Calu3 (cell line): ENCODE measurements at regions of chr15 and their contacts with region 1.

Region 1: GRCh38 chr15:92097474-92098178 is 244.1 kb downstream of the SLCO3A1 start:
- DNase-seq: peak; percentile 64
- H3K4me3 Mint-ChIP-seq: no peak overlapping the region
- H3K27ac Mint-ChIP-seq: no peak overlapping the region
- H3K4me1 Mint-ChIP-seq: peaks cover 7% of the 10 kb centered on the region
- H3K27me3 Mint-ChIP-seq: no peaks in the 10 kb centered on the region
- CTCF ChIP-seq: peak; percentile 85

Region 2: GRCh38 chr15:91970142-91970541 is 127.5 kb before region 1 on chr15:
- CTCF ChIA-PET with region 1: no interaction called
- intact Hi-C with region 1: no loop called
- DNase-seq: no peak
- H3K4me3 Mint-ChIP-seq: no peak overlapping the region
- H3K27ac Mint-ChIP-seq: no peak overlapping the region
- H3K4me1 Mint-ChIP-seq: peaks cover 59% of the 10 kb centered on the region
- H3K27me3 Mint-ChIP-seq: no peaks in the 10 kb centered on the region
- CTCF ChIP-seq: no peak

Region 3: GRCh38 chr15:92158434-92158833 is 60.8 kb after region 1 on chr15:
- CTCF ChIA-PET with region 1: no interaction called
- intact Hi-C with region 1: loop called (anchors 5 kb)
- DNase-seq: peak; percentile 81
- H3K4me3 Mint-ChIP-seq: no peak overlapping the region
- H3K27ac Mint-ChIP-seq: peak overlapping the region; percentile 74
- H3K4me1 Mint-ChIP-seq: peaks cover 32% of the 10 kb centered on the region
- H3K27me3 Mint-ChIP-seq: no peaks in the 10 kb centered on the region
- CTCF ChIP-seq: no peak

Region 4: DNA sequence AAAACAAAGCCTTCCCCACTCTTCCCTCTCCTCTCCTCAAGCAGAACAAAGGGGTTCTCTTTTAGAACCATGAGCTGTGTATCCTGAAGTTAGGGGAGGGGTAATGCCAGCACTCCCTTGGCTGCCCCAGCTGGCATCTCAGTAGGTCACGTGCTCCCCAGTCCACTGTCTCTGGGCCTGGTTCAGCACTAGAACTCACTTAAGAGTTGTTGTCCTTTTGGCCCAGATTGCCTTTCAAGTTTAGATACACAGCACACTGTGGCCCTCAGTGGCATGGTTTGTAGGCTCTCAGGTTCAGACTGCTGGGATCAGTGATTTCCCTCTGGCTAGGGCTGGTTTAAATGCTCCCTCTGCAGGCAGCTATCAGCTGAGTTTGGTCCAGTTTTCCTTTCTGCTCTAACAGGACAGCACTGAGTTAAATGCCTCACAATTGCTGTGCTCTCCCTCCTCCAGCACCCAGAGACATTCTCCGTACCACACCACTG is 107.7 kb after region 1 on chr15:
- CTCF ChIA-PET with region 1: no interaction called
- intact Hi-C with region 1: loop called (anchors 1 kb)
- DNase-seq: peak; percentile 8
- H3K4me3 Mint-ChIP-seq: no peak overlapping the region
- H3K27ac Mint-ChIP-seq: no peak overlapping the region
- H3K4me1 Mint-ChIP-seq: no peaks in the 10 kb centered on the region
- H3K27me3 Mint-ChIP-seq: peaks cover 22% of the 10 kb centered on the region
- CTCF ChIP-seq: no peak

Region 5: DNA sequence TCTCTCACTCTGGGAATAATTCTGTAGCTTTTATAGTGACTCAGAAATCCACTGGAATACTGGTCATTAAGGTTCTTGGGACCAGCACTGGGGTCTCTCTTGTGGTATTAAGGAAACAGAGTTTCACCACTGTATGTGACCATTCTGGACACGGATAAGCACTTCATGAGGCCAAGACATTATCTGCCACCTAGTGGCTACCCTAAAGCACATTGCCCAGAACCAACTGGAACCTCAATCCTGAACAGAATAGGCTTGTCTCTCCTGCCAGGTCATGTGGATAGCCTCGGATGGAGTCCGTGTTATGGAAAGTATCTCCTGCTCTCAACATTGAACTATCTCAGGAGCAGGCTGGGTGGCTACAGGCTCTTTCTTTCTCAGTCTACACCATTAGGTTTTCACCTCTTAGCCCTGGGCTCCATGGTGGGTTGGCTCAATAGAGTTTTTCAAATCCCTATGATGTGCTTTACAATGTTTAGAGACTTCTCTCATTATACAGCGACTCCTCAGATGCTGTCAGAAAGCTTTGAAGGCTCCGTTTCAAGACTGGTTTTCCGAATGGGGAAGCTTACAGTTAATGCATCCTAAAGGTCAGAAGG is 128.5 kb after region 1 on chr15:
- CTCF ChIA-PET with region 1: interaction called, 12 read pairs
- intact Hi-C with region 1: loop called (anchors 1 kb)
- DNase-seq: peak; percentile 28
- H3K4me3 Mint-ChIP-seq: no peak overlapping the region
- H3K27ac Mint-ChIP-seq: no peak overlapping the region
- H3K4me1 Mint-ChIP-seq: no peaks in the 10 kb centered on the region
- H3K27me3 Mint-ChIP-seq: peaks cover 58% of the 10 kb centered on the region
- CTCF ChIP-seq: peak; percentile 65

Region 6: DNA sequence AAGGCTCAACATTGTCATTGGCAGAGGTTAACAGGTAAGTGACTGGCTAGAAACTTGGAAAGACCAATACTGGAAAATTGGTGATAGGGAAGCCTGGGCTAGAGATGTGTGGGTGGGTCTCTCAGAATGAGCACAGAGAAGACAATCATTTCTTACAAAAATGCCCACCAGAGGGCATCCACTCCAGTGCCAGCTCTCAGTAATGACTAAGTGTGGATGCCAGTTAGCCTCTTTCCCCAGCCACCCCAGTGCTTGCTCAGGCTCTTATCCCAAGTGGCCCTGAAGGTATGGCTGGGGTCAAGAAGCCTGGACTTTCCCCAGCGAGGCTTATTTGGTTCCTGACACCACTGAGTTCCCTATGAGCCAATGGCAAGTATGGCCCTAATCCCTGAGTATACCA is 180.2 kb after region 1 on chr15:
- CTCF ChIA-PET with region 1: interaction called, 3 read pairs
- intact Hi-C with region 1: loop called (anchors 1 kb)
- DNase-seq: peak; percentile 38
- H3K4me3 Mint-ChIP-seq: no peak overlapping the region
- H3K27ac Mint-ChIP-seq: no peak overlapping the region
- H3K4me1 Mint-ChIP-seq: no peaks in the 10 kb centered on the region
- H3K27me3 Mint-ChIP-seq: peaks cover 40% of the 10 kb centered on the region
- CTCF ChIP-seq: peak; percentile 40

Region 7: GRCh38 chr15:92383519-92384326 is 286.1 kb after region 1 on chr15:
- CTCF ChIA-PET with region 1: no interaction called
- intact Hi-C with region 1: loop called (anchors 1 kb)
- DNase-seq: peak; percentile 65
- H3K4me3 Mint-ChIP-seq: no peak overlapping the region
- H3K27ac Mint-ChIP-seq: no peak overlapping the region
- H3K4me1 Mint-ChIP-seq: no peaks in the 10 kb centered on the region
- H3K27me3 Mint-ChIP-seq: peaks cover 93% of the 10 kb centered on the region
- CTCF ChIP-seq: peak; percentile 80